ENCODE measurements at regions of chr12 and their contacts with region 1.

Region 1: DNA sequence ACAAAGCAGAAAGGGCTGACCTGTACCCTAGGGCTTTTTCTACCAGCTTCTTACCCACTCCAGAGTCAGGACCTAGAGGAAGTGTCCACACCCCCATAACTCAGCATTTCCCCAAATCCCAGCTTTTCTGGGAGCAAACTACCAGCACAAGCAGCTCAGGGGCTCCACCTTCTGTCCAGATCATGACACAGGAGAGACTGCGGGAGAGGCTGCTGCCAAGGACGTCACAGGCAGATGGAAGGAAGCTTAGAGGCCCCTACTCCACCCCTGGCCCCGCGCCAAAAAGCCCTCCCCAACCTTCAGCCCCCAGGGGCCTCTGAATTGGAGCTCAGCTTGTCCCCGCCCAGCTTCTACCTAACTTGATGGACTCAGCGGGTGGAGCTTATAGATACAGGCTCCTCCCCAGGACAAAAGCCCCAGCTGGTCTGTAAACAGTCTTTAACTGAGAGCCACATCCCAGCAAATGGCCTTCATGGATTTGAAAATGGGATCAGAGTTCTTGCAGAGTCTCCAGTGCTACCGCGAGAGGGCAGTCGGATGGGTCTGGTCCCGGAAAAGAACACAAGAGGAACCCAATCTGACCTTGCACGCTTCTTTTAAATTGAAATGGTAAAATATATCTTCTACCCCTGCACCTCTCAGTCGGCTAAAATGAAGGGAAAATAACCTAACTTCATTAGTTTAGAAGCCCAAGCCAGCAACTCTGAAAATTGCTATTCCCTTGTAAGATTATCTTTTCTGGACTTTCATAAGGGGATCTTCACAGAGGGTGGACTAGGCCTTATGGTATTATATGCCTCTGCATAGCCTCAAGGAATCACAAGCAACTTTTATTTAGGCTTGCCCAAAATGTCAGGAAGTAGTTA is 6.8 kb upstream of the BAZ2A start:
- DNase-seq: peak; percentile 99
- H3K4me3 Mint-ChIP-seq: peak overlapping the region; percentile 95
- H3K27ac Mint-ChIP-seq: peak overlapping the region; percentile 87
- H3K4me1 Mint-ChIP-seq: peaks cover 48% of the 10 kb centered on the region
- H3K27me3 Mint-ChIP-seq: no peaks in the 10 kb centered on the region
- CTCF ChIP-seq: peak; percentile 64

Region 2: DNA sequence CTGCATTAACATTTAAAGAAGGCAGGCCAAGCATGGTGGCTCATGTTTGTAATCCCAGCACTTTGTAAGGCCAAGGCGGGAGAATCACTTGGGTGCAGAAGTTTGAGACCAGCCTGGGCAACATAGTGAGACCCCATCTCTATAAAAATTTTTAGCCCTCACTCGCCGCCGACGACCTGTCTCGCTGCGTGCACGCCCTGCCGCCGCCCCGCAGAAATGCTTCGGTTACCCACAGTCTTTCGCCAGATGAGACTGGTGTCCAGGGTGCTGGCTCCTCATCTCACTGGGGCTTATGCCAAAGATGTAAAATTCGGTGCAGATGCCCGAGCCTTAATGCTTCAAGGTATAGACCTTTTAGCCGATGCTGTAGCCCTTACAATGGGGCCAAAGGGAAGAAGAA is 126.1 kb before region 1 on chr12:
- CTCF ChIA-PET with region 1: interaction called, 45 read pairs
- POLR2A ChIA-PET with region 1: interaction called, 25 read pairs
- intact Hi-C with region 1: loop called (anchors 1 kb)
- DNase-seq: no peak
- H3K4me3 Mint-ChIP-seq: no peak overlapping the region
- H3K27ac Mint-ChIP-seq: no peak overlapping the region
- H3K4me1 Mint-ChIP-seq: no peaks in the 10 kb centered on the region
- H3K27me3 Mint-ChIP-seq: peaks cover 20% of the 10 kb centered on the region
- CTCF ChIP-seq: no peak

Region 3: DNA sequence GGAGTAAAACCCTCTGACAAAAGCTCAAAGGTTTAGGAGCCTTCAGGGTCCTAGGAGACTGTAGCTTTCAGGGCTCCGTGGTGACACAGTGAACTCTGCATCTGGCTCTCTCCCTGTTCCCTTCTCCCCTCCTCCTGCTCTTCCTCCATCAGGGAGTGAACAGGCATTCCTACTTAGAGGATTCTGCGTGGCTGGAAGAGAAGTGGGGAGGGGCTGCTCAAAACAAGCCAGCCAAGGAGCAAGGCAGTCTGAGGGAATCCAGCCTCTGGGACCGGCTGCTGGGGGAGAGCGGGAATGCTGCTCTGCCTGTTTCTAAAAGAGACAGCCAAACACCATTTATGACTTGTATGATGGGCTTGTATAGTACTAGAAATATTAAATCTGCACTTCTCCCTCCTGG is 65.8 kb before region 1 on chr12:
- CTCF ChIA-PET with region 1: interaction called, 12 read pairs
- POLR2A ChIA-PET with region 1: interaction called, 7 read pairs
- intact Hi-C with region 1: no loop called
- DNase-seq: no peak
- H3K4me3 Mint-ChIP-seq: no peak overlapping the region
- H3K27ac Mint-ChIP-seq: no peak overlapping the region
- H3K4me1 Mint-ChIP-seq: peaks cover 22% of the 10 kb centered on the region
- H3K27me3 Mint-ChIP-seq: no peaks in the 10 kb centered on the region
- CTCF ChIP-seq: no peak

Region 4: DNA sequence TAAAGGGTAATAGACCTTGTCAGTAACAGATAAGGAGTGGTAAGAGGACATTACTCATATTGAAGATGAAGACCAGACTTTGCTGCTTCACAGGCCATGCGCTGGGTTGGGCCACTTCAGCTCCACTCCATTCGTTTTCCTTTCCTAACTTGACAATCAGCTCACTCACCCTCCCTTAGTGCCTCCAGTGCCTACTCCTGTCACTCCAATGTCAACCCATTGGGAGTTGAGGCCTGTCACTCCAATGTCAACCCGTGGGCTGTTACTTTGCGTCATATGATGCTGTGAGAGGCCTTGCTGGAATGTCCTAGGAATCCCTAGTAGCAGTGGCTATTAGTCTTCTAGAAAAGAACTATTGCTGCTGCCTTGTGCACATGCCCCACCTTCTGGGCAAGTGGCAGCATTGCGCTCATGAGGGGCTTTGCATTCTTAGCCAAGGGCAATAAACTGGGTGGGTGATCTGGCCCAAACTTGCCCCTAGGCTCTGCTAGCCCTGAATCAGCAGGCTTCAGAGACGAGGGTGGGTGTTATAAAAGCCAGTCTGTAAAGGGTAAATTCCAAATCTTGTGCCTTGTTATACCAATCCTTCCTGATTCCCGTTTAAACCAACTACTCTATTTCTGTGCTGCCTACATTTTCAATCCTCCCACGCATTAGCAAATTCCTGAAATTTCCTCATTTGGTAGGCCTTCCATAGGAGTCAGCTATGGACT is 42.8 kb before region 1 on chr12:
- CTCF ChIA-PET with region 1: interaction called, 32 read pairs
- POLR2A ChIA-PET with region 1: interaction called, 6 read pairs
- intact Hi-C with region 1: loop called (anchors 1 kb)
- DNase-seq: peak; percentile 62
- H3K4me3 Mint-ChIP-seq: no peak overlapping the region
- H3K27ac Mint-ChIP-seq: peak overlapping the region; percentile 77
- H3K4me1 Mint-ChIP-seq: peaks cover 10% of the 10 kb centered on the region
- H3K27me3 Mint-ChIP-seq: no peaks in the 10 kb centered on the region
- CTCF ChIP-seq: peak; percentile 82

Region 5: DNA sequence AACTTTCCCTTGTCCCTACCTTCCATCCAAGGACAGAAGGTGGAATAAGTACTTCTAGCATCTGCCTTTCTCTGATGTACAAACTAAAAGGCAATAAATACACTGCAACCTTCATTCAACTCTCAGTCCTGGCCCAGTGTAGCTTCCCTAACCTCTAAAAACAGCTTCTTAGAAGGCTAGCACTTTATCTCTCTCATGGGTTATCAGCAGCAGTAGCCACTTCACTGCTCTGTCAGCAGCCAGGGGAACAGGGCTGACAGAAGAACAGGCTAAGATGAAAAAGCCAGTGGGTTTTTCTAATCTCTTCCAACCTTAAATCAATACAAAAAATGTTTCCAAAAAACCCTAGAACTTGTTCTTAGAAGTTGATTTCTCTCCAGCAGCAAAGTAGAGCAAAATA is 20.0 kb before region 1 on chr12:
- CTCF ChIA-PET with region 1: interaction called, 21 read pairs
- POLR2A ChIA-PET with region 1: interaction called, 8 read pairs
- intact Hi-C with region 1: no loop called
- DNase-seq: no peak
- H3K4me3 Mint-ChIP-seq: no peak overlapping the region
- H3K27ac Mint-ChIP-seq: no peak overlapping the region
- H3K4me1 Mint-ChIP-seq: peaks cover 5% of the 10 kb centered on the region
- H3K27me3 Mint-ChIP-seq: no peaks in the 10 kb centered on the region
- CTCF ChIP-seq: no peak

Region 6: DNA sequence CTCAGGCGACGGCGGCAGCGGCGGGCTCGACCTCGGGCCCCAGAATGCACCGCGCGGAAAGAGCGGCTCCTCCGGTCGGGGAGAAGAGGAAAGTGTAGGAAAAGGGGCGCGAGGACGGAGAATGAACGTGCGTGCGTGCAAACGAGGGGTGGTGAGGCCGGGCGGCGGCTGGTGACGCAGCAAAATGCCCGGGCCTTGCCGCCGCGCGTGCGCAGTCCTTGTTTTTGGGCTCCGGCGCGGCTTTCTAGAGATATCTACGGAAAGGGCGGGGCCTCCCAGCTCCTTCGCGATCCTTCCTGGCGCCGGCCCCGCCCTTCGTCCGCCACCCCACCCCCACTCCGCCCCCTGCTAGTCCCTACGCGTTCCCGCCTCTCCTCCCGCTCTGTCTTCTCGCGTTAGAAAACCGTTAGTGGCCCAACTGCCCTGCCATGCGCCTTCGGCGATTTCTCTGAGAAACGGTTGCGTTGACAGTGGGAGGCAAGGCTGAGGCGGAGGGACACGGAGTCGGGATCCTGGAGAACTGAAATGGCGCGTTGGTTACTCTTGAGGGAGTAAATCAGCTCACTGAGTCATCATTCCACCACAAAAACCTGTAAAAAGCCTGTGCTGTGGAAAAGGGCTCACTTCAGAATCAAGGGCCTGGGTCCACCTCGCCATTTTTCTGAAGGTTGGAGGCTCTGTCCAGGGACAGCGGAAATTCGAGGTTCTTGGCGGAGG is 51.4 kb after region 1 on chr12 and contains the start of gene PTGES3:
- CTCF ChIA-PET with region 1: interaction called, 12 read pairs
- POLR2A ChIA-PET with region 1: interaction called, 181 read pairs
- intact Hi-C with region 1: loop called (anchors 1 kb)
- DNase-seq: peak; percentile 99
- H3K4me3 Mint-ChIP-seq: peak within 1 kb of the TSS; percentile 89
- H3K27ac Mint-ChIP-seq: peak within 1 kb of the TSS; percentile 97
- H3K4me1 Mint-ChIP-seq: peaks cover 5% of the 10 kb centered on the region
- H3K27me3 Mint-ChIP-seq: no peaks in the 10 kb centered on the region
- CTCF ChIP-seq: no peak
- total RNA-seq, gene PTGES3: 212 and 228 TPM in 2 replicates

Region 7: DNA sequence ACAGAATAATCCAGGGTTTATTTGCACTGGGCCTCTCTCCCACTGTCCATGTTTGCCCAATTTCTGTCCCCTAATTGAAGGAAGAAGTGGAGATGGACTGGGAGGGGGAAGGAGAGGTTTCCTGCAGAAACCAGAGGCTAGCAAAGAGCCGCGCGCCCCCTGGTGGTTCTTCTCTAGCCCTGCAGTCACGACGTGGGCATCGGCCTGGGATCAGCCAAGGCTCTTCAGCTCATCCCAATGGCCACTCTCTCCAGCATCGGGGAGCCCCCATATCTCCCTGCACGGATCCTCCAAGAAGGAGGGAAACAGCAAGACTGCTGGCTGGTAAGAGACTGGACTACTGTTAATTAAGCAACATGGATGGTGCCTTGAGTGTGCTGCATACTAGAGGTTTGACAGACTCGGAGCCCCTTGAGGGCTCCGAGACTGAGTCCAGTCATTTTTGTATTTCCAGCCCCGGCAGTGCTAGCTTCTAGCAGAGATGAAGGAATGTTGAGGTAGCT is 350.7 kb after region 1 on chr12:
- CTCF ChIA-PET with region 1: no interaction called
- POLR2A ChIA-PET with region 1: no interaction called
- intact Hi-C with region 1: loop called (anchors 5 kb)
- DNase-seq: peak; percentile 84
- H3K4me3 Mint-ChIP-seq: no peak overlapping the region
- H3K27ac Mint-ChIP-seq: no peak overlapping the region
- H3K4me1 Mint-ChIP-seq: peaks cover 25% of the 10 kb centered on the region
- H3K27me3 Mint-ChIP-seq: no peaks in the 10 kb centered on the region
- CTCF ChIP-seq: peak; percentile 89

Region 8: DNA sequence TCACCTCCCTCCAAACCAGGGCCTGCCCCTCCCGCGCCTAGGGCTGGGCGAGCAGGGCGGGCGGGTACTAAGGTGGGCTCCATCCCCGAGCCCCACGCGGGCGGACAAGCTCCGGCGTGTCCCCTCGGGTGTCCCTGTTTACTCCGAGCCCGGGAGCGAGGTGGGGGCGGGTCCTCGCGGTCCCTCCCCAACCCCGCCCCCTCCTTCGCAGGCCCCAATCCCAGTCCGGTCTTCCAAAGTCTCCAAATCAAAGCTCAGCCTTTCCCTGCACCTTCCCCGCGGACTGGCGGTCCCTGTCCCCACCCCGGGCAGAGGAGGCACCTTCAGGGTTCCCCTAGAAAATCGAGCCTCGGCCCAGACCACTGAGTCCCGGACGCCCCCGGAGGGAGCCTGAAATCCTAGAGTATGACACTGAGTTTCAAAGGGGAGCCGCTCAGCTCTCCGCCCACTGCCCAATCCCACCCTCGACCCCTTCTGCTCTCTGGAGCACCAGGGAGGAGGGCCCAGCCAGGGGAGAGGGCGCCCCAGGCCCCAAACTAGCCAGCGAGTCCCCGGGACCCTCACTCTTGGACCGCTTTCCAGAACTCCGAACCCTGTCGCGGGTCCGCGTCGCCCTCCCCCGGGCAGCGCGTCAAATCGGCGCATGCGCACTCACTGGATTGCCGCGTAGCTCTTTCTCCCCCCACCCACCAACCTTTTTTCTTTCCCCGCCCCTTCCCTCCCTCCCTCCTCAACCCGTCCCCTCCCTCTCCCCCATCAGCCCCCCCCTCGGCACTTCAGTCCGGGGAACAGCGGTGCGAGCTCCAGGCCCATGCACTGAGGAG is 491.0 kb after region 1 on chr12 and contains the start of gene LRP1:
- CTCF ChIA-PET with region 1: no interaction called
- POLR2A ChIA-PET with region 1: no interaction called
- intact Hi-C with region 1: no loop called
- DNase-seq: peak; percentile 85
- H3K4me3 Mint-ChIP-seq: peak within 1 kb of the TSS; percentile 86
- H3K27ac Mint-ChIP-seq: peak within 1 kb of the TSS; percentile 77
- H3K4me1 Mint-ChIP-seq: peaks cover 30% of the 10 kb centered on the region
- H3K27me3 Mint-ChIP-seq: no peaks in the 10 kb centered on the region
- CTCF ChIP-seq: no peak
- total RNA-seq, gene LRP1: 18.9 and 25.3 TPM in 2 replicates